Calu3 (cell line): ENCODE measurements at regions of chr9 and their contacts with region 1.

Region 1: DNA sequence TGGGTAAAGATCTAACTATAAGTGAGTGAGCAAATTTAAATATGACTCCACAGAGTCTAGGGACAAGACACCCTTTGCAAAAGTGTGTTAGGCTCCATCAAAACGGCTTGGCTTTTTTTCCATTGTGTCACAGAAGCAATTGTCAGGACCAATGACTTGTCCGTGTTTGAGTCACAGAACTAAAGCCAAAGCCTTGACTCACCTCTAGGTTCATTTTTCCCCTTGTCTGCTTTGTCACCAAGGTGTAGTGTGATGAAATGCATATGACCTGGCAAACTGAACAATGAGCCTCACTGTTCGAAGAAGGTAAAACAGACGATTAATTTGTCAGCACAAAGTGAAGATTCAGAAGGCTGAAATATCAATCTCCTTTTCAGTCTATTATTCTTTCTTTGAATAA is 331.0 kb downstream of the GLIS3 start:
- DNase-seq: peak; percentile 61
- H3K4me3 Mint-ChIP-seq: peak overlapping the region; percentile 14
- H3K27ac Mint-ChIP-seq: peak overlapping the region; percentile 96
- H3K4me1 Mint-ChIP-seq: peaks cover 18% of the 10 kb centered on the region
- H3K27me3 Mint-ChIP-seq: no peaks in the 10 kb centered on the region
- CTCF ChIP-seq: no peak

Region 2: GRCh38 chr9:3367185-3367584 is 601.7 kb before region 1 on chr9:
- CTCF ChIA-PET with region 1: no interaction called
- intact Hi-C with region 1: no loop called
- DNase-seq: no peak
- H3K4me3 Mint-ChIP-seq: no peak overlapping the region
- H3K27ac Mint-ChIP-seq: no peak overlapping the region
- H3K4me1 Mint-ChIP-seq: no peaks in the 10 kb centered on the region
- H3K27me3 Mint-ChIP-seq: no peaks in the 10 kb centered on the region
- CTCF ChIP-seq: no peak

Region 3: DNA sequence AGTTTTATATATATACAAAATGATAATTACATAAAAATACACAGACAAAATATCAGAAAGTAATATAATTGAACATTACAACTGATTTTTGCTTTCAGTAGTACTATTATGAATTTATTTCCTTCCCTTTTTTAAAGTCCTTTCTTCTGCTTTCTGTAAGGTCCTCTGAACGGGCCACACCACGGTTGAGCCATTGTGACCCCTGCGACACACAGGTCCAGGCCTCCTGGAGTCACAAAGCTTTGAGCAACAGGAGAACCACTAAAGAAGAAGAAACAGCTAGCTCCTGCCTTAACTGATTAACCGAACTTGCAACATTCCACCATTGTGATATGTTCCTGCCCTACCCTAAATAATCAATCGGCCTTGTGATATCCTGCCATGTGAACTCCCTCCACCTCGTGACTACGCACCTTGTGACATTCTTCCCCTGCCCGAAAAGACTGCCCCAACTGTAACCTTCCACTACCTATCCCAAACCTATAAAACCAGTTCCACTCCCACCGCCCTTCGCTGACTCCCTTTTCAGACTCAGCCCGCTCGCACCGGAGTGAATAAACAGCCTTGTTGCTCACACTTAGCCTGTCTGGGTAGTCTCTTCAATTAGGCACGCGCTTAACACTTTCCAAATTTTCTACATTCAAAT is 68.1 kb before region 1 on chr9:
- CTCF ChIA-PET with region 1: no interaction called
- intact Hi-C with region 1: loop called (anchors 2 kb)
- DNase-seq: peak; percentile 58
- H3K4me3 Mint-ChIP-seq: peak overlapping the region; percentile 32
- H3K27ac Mint-ChIP-seq: peak overlapping the region; percentile 87
- H3K4me1 Mint-ChIP-seq: peaks cover 59% of the 10 kb centered on the region
- H3K27me3 Mint-ChIP-seq: no peaks in the 10 kb centered on the region
- CTCF ChIP-seq: no peak

Region 4: DNA sequence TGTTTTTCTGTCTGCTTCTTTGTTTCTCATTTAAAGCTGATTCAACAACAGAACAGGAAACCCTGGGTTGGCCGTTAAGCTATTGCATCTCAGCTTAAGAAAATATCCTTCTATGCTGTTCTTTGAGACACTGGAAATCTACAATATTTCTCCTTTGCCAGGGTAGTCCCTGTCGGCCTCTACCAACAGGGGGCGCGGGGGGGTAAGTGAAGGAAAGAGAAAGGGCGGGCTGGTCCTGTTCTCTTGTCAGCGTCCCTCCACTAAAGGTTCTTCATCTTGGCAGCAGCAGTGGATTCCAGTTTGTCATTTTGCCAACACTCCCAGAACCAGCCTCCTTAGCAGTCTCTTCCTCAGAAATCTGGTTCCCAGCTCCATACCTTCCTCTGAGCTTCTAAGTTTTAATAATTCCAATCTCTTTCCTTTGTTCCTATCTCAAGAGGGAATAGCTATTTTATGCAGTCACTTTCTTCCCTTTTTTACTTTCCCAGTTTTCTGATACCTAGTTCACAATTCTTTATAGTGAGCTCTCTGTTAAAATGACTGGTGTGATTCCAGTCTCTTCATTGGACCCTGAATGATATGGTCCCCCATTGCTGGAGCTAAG is 108.7 kb after region 1 on chr9:
- CTCF ChIA-PET with region 1: no interaction called
- intact Hi-C with region 1: no loop called
- DNase-seq: peak; percentile 84
- H3K4me3 Mint-ChIP-seq: no peak overlapping the region
- H3K27ac Mint-ChIP-seq: peak overlapping the region; percentile 78
- H3K4me1 Mint-ChIP-seq: peaks cover 40% of the 10 kb centered on the region
- H3K27me3 Mint-ChIP-seq: no peaks in the 10 kb centered on the region
- CTCF ChIP-seq: peak; percentile 66